Panc1 (cell line): ENCODE measurements at regions of chr7 and their contacts with region 1.

Region 1: GRCh38 chr7:30263090-30263710 is 21.2 kb upstream of the ZNRF2 start:
- DNase-seq: no peak
- ATAC-seq: 0 out of 2 replicates have a peak, but pooled peaks have one; percentile 26
- H3K4me3 ChIP-seq: no peak overlapping the region
- H3K27ac ChIP-seq: no peak overlapping the region
- H3K4me1 ChIP-seq: no peaks in the 10 kb centered on the region
- H3K27me3 ChIP-seq: no peaks in the 10 kb centered on the region; the same call in 1 of the 2 replicates
- CTCF ChIP-seq: no peak

Region 2: GRCh38 chr7:30390736-30391636 is 127.8 kb after region 1 on chr7:
- CTCF ChIA-PET with region 1: interaction called, 10 read pairs
- POLR2A ChIA-PET with region 1: no interaction called
- in situ Hi-C with region 1: no loop called
- intact Hi-C with region 1: no loop called
- DNase-seq: no peak
- ATAC-seq: no peak
- H3K4me3 ChIP-seq: no peak overlapping the region
- H3K27ac ChIP-seq: no peak overlapping the region
- H3K4me1 ChIP-seq: no peaks in the 10 kb centered on the region
- H3K27me3 ChIP-seq: no peaks in the 10 kb centered on the region
- CTCF ChIP-seq: no peak